ENCODE measurements at regions of chr5 and their contacts with region 1.

Region 1: DNA sequence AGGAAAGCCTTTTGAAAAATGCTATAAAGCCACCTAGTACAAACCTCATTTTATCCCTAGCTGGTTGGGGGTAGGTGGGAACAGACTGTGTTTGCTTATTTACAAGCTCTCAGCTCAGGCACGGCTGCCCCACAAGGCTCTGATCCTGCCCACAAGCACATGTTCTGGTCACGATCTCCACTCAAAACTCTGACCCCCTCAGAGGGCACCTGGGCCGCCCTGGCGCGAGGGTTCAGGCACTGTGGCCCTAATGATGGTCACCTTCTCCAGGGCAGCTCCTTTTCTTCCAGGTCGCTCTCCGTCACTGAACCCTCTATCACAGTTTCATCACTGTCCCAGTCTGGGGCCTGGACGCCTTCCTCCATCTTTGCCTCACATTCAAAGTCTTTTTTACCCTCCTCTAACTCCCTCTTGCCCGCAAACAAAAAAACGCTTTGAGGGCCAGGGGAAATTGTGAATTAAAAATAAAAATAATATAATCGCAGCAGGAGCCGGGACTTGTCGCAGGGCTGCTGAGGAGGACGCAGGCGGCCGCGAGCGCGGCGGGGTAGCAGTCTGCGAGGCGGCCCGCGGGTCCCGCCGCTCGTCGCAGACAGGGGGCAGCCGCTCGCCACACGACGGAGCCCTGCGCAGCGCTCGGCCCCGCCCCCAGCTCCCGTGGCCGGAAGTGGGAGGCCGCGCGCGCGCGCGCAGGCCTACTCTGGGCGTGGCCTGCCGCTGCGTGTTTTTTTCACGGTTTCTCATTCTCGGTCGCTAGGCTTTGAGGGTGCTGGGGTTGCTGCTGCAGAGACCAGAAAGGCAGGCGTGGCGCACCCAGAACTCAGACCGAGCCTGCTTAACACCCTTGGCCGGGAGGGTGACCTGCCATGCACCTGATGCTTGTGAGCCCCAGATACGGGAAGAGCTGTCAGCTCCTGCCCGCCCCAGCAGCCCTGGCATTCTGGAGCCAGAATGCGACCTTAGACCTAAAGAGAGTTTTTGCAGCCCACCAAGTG is at the start of gene ANKRD31:
- DNase-seq: peak; percentile 81 to 95 (median 90)
- ATAC-seq: peak; percentile 98
- H3K4me3 ChIP-seq: peak within 1 kb of the TSS; percentile 65 to 91
- H3K4me3 Mint-ChIP-seq: peak within 1 kb of the TSS; percentile 94
- H3K27ac ChIP-seq: peak within 1 kb of the TSS; percentile 84 to 89
- H3K27ac Mint-ChIP-seq: peak within 1 kb of the TSS; percentile 99
- H3K4me1 ChIP-seq: peaks cover 15% of the 10 kb centered on the region
- H3K4me1 Mint-ChIP-seq: peaks cover 25% of the 10 kb centered on the region
- H3K27me3 ChIP-seq: no peaks in the 10 kb centered on the region
- H3K27me3 Mint-ChIP-seq: no peaks in the 10 kb centered on the region
- CTCF ChIP-seq: peak; percentile 89
- total RNA-seq, gene ANKRD31: 0.84 to 0.89 TPM

Region 2: GRCh38 chr5:73565139-73565968 is 1671.3 kb before region 1 on chr5 and contains the starts of genes ANKRA2 and UTP15:
- CTCF ChIA-PET with region 1: no interaction called
- POLR2A ChIA-PET with region 1: no interaction called
- intact Hi-C with region 1: loop called in 1 of 2 experiments (anchors 5 kb)
- DNase-seq: peak; percentile 97 to 100 (median 99)
- ATAC-seq: peak; percentile 96
- H3K4me3 ChIP-seq: peak within 1 kb of the TSS; percentile 72 to 81
- H3K4me3 Mint-ChIP-seq: peak within 1 kb of the TSS; percentile 100
- H3K27ac ChIP-seq: peak within 1 kb of the TSS; percentile 94 to 95
- H3K27ac Mint-ChIP-seq: peak within 1 kb of the TSS; percentile 100
- H3K4me1 ChIP-seq: peaks cover 26% of the 10 kb centered on the region
- H3K4me1 Mint-ChIP-seq: peaks cover 58% of the 10 kb centered on the region
- H3K27me3 ChIP-seq: no peaks in the 10 kb centered on the region
- H3K27me3 Mint-ChIP-seq: no peaks in the 10 kb centered on the region
- CTCF ChIP-seq: no peak
- total RNA-seq, gene ANKRA2: 43.4 to 44.1 TPM
- total RNA-seq, gene UTP15: 60.9 to 69.1 TPM

Region 3: DNA sequence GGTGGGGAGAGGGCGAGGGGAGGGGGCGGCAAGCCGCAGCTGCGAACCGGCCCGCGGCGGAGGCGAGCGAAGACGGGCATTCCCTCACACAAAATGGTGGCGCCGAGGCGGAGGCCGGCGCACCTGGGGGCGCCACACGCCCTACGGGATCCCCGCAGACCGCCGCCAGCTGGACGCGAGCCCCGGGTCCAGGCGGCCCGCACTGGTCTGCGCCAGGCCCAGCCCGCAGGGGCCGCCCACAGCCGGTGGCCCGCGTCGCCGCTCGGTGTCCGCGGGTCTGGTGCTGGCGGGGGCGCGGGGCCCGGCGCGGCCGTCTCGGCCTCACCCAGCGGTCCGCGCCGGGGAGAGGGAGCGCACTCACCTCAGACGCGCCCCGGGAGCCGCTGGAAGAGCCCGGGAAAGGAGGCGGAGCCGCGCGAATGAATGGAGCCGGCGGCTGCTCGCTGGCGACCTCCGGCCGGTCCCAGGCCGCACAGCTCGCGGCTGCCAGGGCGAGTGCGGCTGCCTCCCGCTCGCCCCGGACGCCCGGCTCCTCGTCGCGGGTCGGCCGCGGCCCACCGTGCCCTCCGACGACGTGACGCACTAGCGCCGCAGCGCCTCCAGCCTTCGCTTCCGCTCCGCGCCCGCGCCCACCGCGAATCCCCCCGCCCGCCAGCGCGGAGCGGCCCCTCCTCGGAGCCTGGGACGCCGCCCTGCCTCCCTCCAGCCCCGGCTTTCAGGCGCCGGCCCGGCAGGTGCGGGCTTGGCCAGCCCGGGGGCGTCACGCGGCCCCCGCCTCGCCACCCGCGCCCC is 370.6 kb before region 1 on chr5 and contains the start of gene FAM169A:
- CTCF ChIA-PET with region 1: no interaction called
- POLR2A ChIA-PET with region 1: no interaction called
- intact Hi-C with region 1: loop called (anchors 5 kb)
- DNase-seq: peak; percentile 22 to 81 (median 56)
- ATAC-seq: peak; percentile 74
- H3K4me3 ChIP-seq: peak within 1 kb of the TSS; percentile 78 to 86
- H3K4me3 Mint-ChIP-seq: peak within 1 kb of the TSS; percentile 94
- H3K27ac ChIP-seq: peak within 1 kb of the TSS; percentile 58 to 71
- H3K27ac Mint-ChIP-seq: peak within 1 kb of the TSS; percentile 92
- H3K4me1 ChIP-seq: peaks cover 24% of the 10 kb centered on the region
- H3K4me1 Mint-ChIP-seq: peaks cover 40% of the 10 kb centered on the region
- H3K27me3 ChIP-seq: no peaks in the 10 kb centered on the region
- H3K27me3 Mint-ChIP-seq: no peaks in the 10 kb centered on the region
- CTCF ChIP-seq: no peak
- total RNA-seq, gene FAM169A: 21.0 to 21.6 TPM

Region 4: DNA sequence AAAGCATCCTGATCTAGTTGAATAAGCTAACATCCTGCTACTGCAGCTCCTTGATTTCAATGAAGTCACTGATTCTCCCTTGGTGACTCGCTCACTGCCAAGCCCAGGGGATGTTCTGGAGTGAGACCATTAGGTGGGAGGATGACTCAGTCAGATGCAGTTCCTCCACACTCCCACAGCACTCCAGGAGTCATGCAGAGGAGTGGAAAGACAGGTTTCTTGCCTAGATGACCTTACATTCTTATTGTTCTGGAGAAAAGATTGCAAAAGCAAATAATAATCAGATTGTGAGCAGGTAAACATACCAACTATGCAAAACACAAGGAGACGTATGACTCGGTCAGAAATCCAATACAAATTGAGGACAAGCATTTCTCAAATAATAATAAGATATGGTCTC is 199.5 kb before region 1 on chr5:
- CTCF ChIA-PET with region 1: interaction called, 8 read pairs
- POLR2A ChIA-PET with region 1: interaction called, 11 read pairs
- intact Hi-C with region 1: no loop called
- DNase-seq: no peak
- ATAC-seq: no peak
- H3K4me3 ChIP-seq: no peak overlapping the region
- H3K4me3 Mint-ChIP-seq: no peak overlapping the region
- H3K27ac ChIP-seq: no peak overlapping the region
- H3K27ac Mint-ChIP-seq: peak overlapping the region; percentile 80
- H3K4me1 ChIP-seq: peaks cover 49% of the 10 kb centered on the region
- H3K4me1 Mint-ChIP-seq: peaks cover 79% of the 10 kb centered on the region
- H3K27me3 ChIP-seq: no peaks in the 10 kb centered on the region
- H3K27me3 Mint-ChIP-seq: no peaks in the 10 kb centered on the region
- CTCF ChIP-seq: no peak

Region 5: GRCh38 chr5:75140277-75140676 is 96.3 kb before region 1 on chr5:
- CTCF ChIA-PET with region 1: no interaction called
- POLR2A ChIA-PET with region 1: no interaction called
- intact Hi-C with region 1: no loop called
- DNase-seq: no peak
- ATAC-seq: no peak
- H3K4me3 ChIP-seq: no peak overlapping the region
- H3K4me3 Mint-ChIP-seq: no peak overlapping the region
- H3K27ac ChIP-seq: no peak overlapping the region
- H3K27ac Mint-ChIP-seq: no peak overlapping the region
- H3K4me1 ChIP-seq: no peaks in the 10 kb centered on the region
- H3K4me1 Mint-ChIP-seq: peaks cover 5% of the 10 kb centered on the region
- H3K27me3 ChIP-seq: no peaks in the 10 kb centered on the region
- H3K27me3 Mint-ChIP-seq: no peaks in the 10 kb centered on the region
- CTCF ChIP-seq: no peak

Region 6: DNA sequence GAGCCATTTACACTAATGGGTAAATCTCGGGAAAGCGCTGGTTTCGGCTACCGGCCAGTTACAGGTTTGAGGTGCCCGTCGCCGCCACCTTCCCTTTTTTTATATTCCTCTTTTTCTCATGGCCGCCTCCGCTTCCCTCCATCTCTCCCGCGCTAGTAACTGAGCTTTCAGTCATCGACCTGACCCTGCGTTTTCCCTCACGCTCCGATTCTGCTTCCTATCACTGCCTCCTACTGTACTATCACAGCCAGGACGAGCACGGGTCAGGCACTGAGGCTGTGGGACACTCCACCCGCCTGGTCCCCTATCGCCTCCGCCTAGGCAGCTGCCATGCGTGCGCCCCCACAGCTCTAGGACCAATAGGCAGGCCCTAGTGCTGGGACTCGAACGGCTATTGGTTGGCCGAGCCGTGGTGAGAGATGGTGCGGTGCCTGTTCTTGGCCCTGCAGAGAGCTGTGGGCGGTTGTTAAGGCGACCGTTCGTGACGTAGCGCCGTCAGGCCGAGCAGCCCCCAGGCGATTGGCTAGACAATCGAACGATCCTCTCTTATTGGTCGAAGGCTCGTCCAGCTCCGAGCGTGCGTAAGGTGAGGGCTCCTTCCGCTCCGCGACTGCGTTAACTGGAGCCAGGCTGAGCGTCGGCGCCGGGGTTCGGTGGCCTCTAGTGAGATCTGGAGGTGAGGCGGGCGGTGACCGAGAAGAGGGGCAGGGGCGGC is 100.2 kb after region 1 on chr5 and contains the start of gene HMGCR:
- CTCF ChIA-PET with region 1: interaction called, 4 read pairs
- POLR2A ChIA-PET with region 1: interaction called, 17 read pairs
- intact Hi-C with region 1: loop called (anchors 1 kb)
- DNase-seq: peak; percentile 93 to 99 (median 97)
- ATAC-seq: peak; percentile 92
- H3K4me3 ChIP-seq: peak within 1 kb of the TSS; percentile 72 to 96
- H3K4me3 Mint-ChIP-seq: no peak within 1 kb of the TSS
- H3K27ac ChIP-seq: peak within 1 kb of the TSS; percentile 87 to 92
- H3K27ac Mint-ChIP-seq: no peak within 1 kb of the TSS
- H3K4me1 ChIP-seq: peaks cover 18% of the 10 kb centered on the region
- H3K4me1 Mint-ChIP-seq: peaks cover 35% of the 10 kb centered on the region
- H3K27me3 ChIP-seq: no peaks in the 10 kb centered on the region
- H3K27me3 Mint-ChIP-seq: no peaks in the 10 kb centered on the region
- CTCF ChIP-seq: no peak
- total RNA-seq, gene HMGCR: 72.8 to 73.3 TPM

Region 7: DNA sequence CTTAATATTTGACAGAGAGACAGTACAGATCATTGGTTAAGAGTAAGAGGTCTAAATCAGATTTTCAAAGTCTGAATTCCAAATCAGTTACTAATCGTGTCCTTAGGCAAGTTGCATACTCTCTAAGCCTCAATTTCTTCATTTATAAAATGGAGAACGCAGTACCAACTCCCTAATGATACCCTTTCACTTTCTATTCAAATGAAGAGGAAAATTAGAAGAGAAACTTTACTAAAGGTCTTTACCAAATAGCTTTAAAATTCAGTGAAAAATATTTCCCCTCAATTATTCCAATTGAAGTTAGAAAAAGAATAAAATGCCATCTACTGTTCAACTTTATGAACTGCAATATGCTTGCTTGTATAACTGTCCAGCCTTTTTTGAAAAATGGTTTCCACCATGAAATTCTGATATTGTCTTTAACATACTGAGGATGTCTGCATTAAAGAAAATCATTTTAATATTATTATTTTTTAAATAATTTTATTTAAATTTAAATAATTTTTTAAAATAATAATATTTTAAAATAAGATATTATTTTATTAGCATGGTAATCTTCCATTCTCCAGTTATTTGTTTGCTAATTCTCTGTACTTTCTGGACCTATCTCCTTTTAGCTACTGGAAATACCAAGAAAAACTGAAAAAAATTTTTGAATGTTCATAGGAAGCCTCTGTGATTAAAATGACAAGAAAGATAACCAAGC is 444.7 kb after region 1 on chr5:
- CTCF ChIA-PET with region 1: interaction called, 7 read pairs
- POLR2A ChIA-PET with region 1: interaction called, 3 read pairs
- intact Hi-C with region 1: loop called (anchors 1 to 2 kb)
- DNase-seq: peak in 2 of 9 experiments; percentile 45 to 61
- ATAC-seq: peak; percentile 49
- H3K4me3 ChIP-seq: no peak overlapping the region
- H3K4me3 Mint-ChIP-seq: no peak overlapping the region
- H3K27ac ChIP-seq: no peak overlapping the region
- H3K27ac Mint-ChIP-seq: no peak overlapping the region
- H3K4me1 ChIP-seq: peaks cover 10% of the 10 kb centered on the region
- H3K4me1 Mint-ChIP-seq: peaks cover 8% of the 10 kb centered on the region
- H3K27me3 ChIP-seq: no peaks in the 10 kb centered on the region
- H3K27me3 Mint-ChIP-seq: no peaks in the 10 kb centered on the region
- CTCF ChIP-seq: peak; percentile 90

Region 8: DNA sequence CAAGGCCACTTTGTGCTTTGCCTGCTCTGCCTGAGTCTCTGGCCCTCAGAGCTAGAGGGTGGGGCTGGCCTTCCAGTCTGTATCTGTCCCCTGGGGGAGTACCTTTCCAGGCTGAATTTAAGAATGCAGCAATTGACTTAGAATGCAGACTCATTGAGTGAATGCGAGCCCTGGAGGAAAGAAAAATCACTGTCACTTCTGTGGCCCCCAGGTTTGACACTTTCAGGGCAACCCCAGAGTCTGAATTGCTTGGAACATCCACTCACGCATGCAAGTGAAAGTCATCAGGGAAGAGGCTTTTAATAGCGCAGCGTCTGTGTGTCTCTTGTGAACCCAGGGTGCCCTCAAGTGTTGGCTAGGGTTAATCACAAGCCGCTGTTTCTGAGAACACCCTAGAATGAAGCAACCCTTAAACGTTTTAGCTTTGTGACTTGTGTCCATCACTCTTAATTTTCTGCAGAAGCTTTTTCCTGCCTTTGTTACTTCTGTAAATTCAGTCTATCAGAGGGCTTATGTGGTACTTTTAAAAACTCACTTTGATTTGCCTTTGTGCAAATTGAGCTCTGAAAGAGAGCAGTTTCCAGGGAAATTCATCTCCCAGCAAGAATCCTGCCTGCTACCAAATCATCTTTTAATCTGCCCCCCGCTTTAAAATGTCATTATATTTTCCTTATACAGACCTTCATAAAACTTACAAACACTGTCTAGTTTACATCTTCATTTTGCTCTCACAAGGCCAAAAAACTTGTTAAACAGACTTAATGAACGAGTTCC is 1019.7 kb after region 1 on chr5:
- CTCF ChIA-PET with region 1: no interaction called
- POLR2A ChIA-PET with region 1: no interaction called
- intact Hi-C with region 1: loop called in 1 of 2 experiments (anchors 10 kb)
- DNase-seq: peak; percentile 15 to 82 (median 57)
- ATAC-seq: peak; percentile 98
- H3K4me3 ChIP-seq: no peak overlapping the region
- H3K4me3 Mint-ChIP-seq: peak overlapping the region; percentile 30
- H3K27ac ChIP-seq: no peak overlapping the region
- H3K27ac Mint-ChIP-seq: no peak overlapping the region
- H3K4me1 ChIP-seq: peaks cover 3% of the 10 kb centered on the region
- H3K4me1 Mint-ChIP-seq: peaks cover 3% of the 10 kb centered on the region
- H3K27me3 ChIP-seq: peaks cover 0 to 3% of the 10 kb centered on the region in 2 experiments
- H3K27me3 Mint-ChIP-seq: peaks cover 9% of the 10 kb centered on the region
- CTCF ChIP-seq: peak; percentile 62

Measured in CD8-positive, alpha-beta T cell (primary cell).